HepG2 (cell line): ENCODE measurements at regions of chr9 and their contacts with region 1.

Region 1: DNA sequence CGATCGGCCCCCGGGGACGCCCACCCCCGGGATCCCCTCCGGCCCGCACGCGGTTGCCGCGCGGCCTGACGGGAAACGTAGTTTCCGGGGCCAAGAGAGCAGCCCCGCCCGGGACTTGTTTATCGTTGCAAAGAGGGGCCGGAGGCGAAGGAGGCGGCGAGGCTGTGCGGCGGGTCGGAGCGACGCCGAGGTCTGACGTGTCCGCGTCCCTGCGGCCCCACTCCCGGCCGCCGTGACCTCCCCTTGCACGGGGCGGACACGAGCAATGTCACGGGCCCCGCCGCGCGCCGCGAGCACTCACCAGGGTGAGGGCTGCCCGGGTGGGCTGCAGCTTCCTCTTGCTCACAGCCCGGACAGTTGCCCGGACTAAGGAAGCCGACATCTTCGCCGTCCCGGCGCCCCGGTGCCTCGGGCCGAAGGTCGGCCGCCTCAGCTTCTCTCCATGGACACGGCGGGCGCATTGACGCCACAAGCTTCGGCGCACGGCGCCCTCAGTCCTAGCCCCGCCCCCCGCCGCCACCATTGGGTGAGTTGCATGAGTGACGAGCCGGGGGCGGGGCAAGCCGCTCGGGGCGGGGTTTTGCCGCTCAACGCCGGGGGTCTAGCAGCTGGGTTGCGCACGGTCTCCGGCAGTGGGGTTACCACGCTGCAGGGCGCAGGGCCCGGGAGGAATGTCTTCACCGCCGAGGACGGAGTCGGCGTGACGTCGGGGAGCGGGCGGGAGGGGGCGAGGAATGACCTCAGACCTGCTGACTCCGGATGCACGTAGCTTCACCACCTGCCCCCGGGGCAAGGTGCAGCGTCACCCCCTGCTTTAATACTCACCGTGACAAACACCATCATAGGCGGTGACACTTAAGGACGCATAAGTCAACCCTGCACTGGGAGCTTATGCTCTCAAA is at the start of gene ISCA1:
- DNase-seq: peak; percentile 86
- ATAC-seq: peak; percentile 85
- H3K4me3 ChIP-seq: peak within 1 kb of the TSS; percentile 69 to 93 (median 86)
- H3K27ac ChIP-seq: peak within 1 kb of the TSS; percentile 97
- H3K4me1 ChIP-seq: peaks cover 46% of the 10 kb centered on the region
- H3K27me3 ChIP-seq: no peaks in the 10 kb centered on the region
- CTCF ChIP-seq: no peak; the same call in 1 of the 2 replicates
- EP300 ChIP-seq: no peak
- POLR2A ChIP-seq: peak; percentile 81 to 87
- RAD21 ChIP-seq: peak; percentile 45; the same call in 1 of the 2 replicates
- total RNA-seq, gene ISCA1: 40.9 and 55.0 TPM in 2 replicates

Region 2: GRCh38 chr9:85940832-85941621 is 341.3 kb before region 1 on chr9 and contains the start of gene NAA35:
- CTCF ChIA-PET with region 1: no interaction called
- POLR2A ChIA-PET with region 1: no interaction called
- in situ Hi-C with region 1: loop called (anchors 10 kb)
- intact Hi-C with region 1: no loop called
- DNase-seq: peak; percentile 94
- ATAC-seq: peak; percentile 91
- H3K4me3 ChIP-seq: peak within 1 kb of the TSS; percentile 85 to 99 (median 91)
- H3K27ac ChIP-seq: peak within 1 kb of the TSS; percentile 93
- H3K4me1 ChIP-seq: peaks cover 52% of the 10 kb centered on the region
- H3K27me3 ChIP-seq: no peaks in the 10 kb centered on the region; a peak in 1 of 5 replicates
- CTCF ChIP-seq: peak; percentile 6; the same call in 1 of the 2 replicates
- EP300 ChIP-seq: 0 out of 4 replicates have a peak, but pooled peaks of 1 of the 2 experiments have one; percentile 11
- POLR2A ChIP-seq: peak; percentile 38 to 80; a peak in 3 of 4 replicates
- RAD21 ChIP-seq: no peak
- total RNA-seq, gene NAA35: 28.9 and 35.1 TPM in 2 replicates

Region 3: DNA sequence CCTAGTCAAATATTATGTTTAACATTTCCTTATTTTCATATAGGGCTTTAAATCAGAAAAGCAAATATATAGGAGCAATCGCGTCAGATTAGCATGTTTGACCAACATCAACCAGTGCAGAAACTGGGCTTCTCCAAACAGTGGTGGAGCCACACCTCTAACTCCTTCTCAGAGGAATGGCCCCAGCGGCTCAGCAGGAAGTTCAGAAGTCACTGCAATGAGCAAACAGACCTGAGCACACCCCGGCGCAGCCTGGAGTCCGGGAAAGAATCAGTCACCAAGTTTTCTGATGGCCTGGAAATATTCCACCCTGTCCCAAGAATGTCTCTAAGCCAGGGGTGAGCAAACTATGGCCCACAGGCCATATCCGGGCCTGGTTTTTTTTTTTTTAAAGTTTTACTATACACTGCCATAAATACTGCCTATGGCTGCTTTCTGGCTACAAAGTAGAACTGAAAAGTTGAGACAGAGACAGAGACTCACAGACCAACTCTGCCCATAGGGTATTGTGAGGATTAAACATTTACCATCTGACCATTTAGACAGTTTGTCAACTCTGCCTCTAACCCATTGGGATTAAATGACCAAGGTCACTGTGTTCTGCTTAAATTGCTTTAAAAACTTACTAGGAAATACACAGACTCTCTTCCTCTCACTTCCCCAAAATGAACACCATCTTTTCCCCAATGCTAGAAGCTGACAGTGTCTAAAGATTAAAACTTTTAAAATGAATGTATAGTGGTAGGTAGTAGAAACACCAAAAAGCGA is 188.4 kb before region 1 on chr9:
- CTCF ChIA-PET with region 1: no interaction called
- POLR2A ChIA-PET with region 1: no interaction called
- in situ Hi-C with region 1: no loop called
- intact Hi-C with region 1: loop called (anchors 5 kb)
- DNase-seq: peak; percentile 95
- ATAC-seq: peak; percentile 100
- H3K4me3 ChIP-seq: no peak overlapping the region
- H3K27ac ChIP-seq: no peak overlapping the region
- H3K4me1 ChIP-seq: peaks cover 20% of the 10 kb centered on the region
- H3K27me3 ChIP-seq: peaks cover 6 to 66% of the 10 kb centered on the region in 2 experiments
- CTCF ChIP-seq: no peak
- EP300 ChIP-seq: peak in 1 of 2 experiments; percentile 50; a peak in 2 of 4 replicates
- POLR2A ChIP-seq: no peak
- RAD21 ChIP-seq: no peak

Region 4: DNA sequence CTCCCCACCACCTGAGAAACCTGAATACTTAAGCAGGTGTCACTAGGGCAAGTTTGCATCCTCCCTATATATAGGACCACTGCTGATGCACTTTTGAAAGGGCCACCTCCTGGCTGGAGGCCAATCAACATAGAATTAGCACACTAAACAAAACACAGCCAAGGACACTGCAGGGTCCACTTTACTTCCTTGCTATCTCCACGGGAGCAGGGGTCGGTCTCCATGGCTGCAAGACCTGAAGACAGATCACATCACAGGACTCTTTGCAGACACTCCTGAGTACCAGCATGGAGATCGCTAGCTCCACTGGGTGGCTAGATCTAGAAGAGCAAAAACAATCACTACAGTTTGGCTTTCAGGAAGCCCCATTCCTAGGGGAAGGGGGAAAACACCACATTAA is 95.2 kb before region 1 on chr9:
- CTCF ChIA-PET with region 1: no interaction called
- POLR2A ChIA-PET with region 1: no interaction called
- in situ Hi-C with region 1: no loop called
- intact Hi-C with region 1: no loop called
- DNase-seq: peak; percentile 2
- ATAC-seq: peak; percentile 35; the same call in 1 of the 3 replicates
- H3K4me3 ChIP-seq: no peak overlapping the region
- H3K27ac ChIP-seq: no peak overlapping the region
- H3K4me1 ChIP-seq: 0 out of 2 replicates have a peak, but pooled peaks cover 4% of the 10 kb centered on the region
- H3K27me3 ChIP-seq: peaks cover 0 to 10% of the 10 kb centered on the region in 2 experiments; a peak in 1 of 5 replicates
- CTCF ChIP-seq: no peak
- EP300 ChIP-seq: no peak
- POLR2A ChIP-seq: no peak
- RAD21 ChIP-seq: no peak

Region 5: GRCh38 chr9:86246752-86247161 is 35.6 kb before region 1 on chr9:
- CTCF ChIA-PET with region 1: no interaction called
- POLR2A ChIA-PET with region 1: no interaction called
- in situ Hi-C with region 1: no loop called
- intact Hi-C with region 1: no loop called
- DNase-seq: peak; percentile 61
- ATAC-seq: peak; percentile 100
- H3K4me3 ChIP-seq: peak overlapping the region in 2 of 3 experiments; percentile 16 to 29; a peak in 3 of 6 replicates
- H3K27ac ChIP-seq: no peak overlapping the region
- H3K4me1 ChIP-seq: peaks cover 25% of the 10 kb centered on the region
- H3K27me3 ChIP-seq: no peaks in the 10 kb centered on the region
- CTCF ChIP-seq: peak; percentile 79
- EP300 ChIP-seq: no peak
- POLR2A ChIP-seq: no peak
- RAD21 ChIP-seq: peak; percentile 63

Region 6: GRCh38 chr9:86257391-86257790 is 24.9 kb before region 1 on chr9:
- CTCF ChIA-PET with region 1: no interaction called
- POLR2A ChIA-PET with region 1: no interaction called
- in situ Hi-C with region 1: no loop called
- intact Hi-C with region 1: no loop called
- DNase-seq: no peak
- ATAC-seq: no peak
- H3K4me3 ChIP-seq: no peak overlapping the region
- H3K27ac ChIP-seq: no peak overlapping the region
- H3K4me1 ChIP-seq: no peaks in the 10 kb centered on the region
- H3K27me3 ChIP-seq: no peaks in the 10 kb centered on the region
- CTCF ChIP-seq: no peak
- EP300 ChIP-seq: no peak
- POLR2A ChIP-seq: no peak
- RAD21 ChIP-seq: no peak

Region 7: DNA sequence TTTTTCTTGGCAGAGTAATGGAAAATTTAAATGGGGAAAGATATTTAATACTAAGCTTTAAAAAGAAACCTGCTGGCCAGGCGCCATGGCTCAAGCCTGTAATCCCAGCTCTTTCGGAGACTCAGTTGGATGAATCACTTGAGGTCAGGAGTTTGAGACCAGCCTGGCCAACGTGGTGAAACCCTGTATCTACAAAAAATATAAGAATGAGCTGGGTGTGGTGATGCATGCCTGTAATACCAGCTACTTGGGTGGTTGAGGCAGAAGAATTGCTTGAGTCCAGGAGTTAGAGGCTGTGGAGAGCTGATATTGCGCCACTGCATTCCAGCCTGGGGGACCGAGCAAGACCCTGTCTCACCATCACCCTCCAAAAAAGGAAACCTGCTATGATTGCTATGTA is 39.0 kb after region 1 on chr9:
- CTCF ChIA-PET with region 1: no interaction called
- POLR2A ChIA-PET with region 1: no interaction called
- in situ Hi-C with region 1: no loop called
- intact Hi-C with region 1: no loop called
- DNase-seq: no peak
- ATAC-seq: no peak
- H3K4me3 ChIP-seq: no peak overlapping the region
- H3K27ac ChIP-seq: no peak overlapping the region
- H3K4me1 ChIP-seq: no peaks in the 10 kb centered on the region
- H3K27me3 ChIP-seq: no peaks in the 10 kb centered on the region
- CTCF ChIP-seq: no peak
- EP300 ChIP-seq: no peak
- POLR2A ChIP-seq: no peak
- RAD21 ChIP-seq: no peak

Region 8: DNA sequence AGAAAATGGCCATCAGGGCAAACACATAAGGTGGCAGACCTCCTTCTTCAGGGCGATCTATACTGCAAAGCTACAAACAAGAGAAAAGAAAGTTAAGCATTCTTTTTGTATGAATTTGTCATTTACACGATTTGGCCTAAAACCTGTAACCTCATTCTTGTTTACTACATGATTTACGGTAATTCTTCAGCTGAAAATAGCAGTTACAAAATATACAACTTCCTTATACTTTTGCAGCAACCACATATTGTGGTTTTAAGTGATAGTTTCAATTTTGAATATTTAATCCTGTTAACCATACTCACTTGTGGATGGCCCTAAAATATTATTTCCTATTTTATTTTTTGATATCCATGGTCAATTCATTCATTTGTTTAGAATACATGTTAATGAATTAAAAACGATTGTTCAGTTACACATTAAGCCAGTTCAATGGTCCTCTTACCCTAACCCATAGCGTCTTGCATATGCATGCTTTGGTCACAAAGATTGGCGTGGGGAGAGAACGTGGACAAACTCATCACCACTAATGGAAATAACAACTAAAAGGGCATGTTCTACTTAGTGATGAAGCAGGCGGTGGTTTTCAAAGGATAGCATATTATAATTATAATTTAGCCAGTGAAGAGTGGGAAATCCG is 55.3 kb after region 1 on chr9:
- CTCF ChIA-PET with region 1: no interaction called
- POLR2A ChIA-PET with region 1: interaction called, 4 read pairs
- in situ Hi-C with region 1: no loop called
- intact Hi-C with region 1: loop called (anchors 2 kb)
- DNase-seq: no peak
- ATAC-seq: no peak
- H3K4me3 ChIP-seq: no peak overlapping the region
- H3K27ac ChIP-seq: peak overlapping the region; percentile 78
- H3K4me1 ChIP-seq: peaks cover 68% of the 10 kb centered on the region
- H3K27me3 ChIP-seq: no peaks in the 10 kb centered on the region
- CTCF ChIP-seq: no peak
- EP300 ChIP-seq: no peak
- POLR2A ChIP-seq: no peak
- RAD21 ChIP-seq: no peak

Region 9: GRCh38 chr9:86354011-86354817 is 71.9 kb after region 1 on chr9 and contains the start of gene TUT7:
- CTCF ChIA-PET with region 1: no interaction called
- POLR2A ChIA-PET with region 1: interaction called, 4 read pairs
- in situ Hi-C with region 1: no loop called
- intact Hi-C with region 1: loop called (anchors 5 kb)
- DNase-seq: peak; percentile 90
- ATAC-seq: peak; percentile 95
- H3K4me3 ChIP-seq: peak within 1 kb of the TSS; percentile 94 to 100 (median 96)
- H3K27ac ChIP-seq: peak within 1 kb of the TSS; percentile 85
- H3K4me1 ChIP-seq: peaks cover 47% of the 10 kb centered on the region
- H3K27me3 ChIP-seq: no peaks in the 10 kb centered on the region; a peak in 1 of 5 replicates
- CTCF ChIP-seq: 0 out of 2 replicates have a peak, but pooled peaks have one; percentile 1
- EP300 ChIP-seq: no peak
- POLR2A ChIP-seq: peak; percentile 74 to 89; a peak in 3 of 4 replicates
- RAD21 ChIP-seq: peak; percentile 63
- total RNA-seq, gene TUT7: 19.4 and 21.3 TPM in 2 replicates

Region 10: GRCh38 chr9:86405926-86406325 is 123.6 kb after region 1 on chr9:
- CTCF ChIA-PET with region 1: no interaction called
- POLR2A ChIA-PET with region 1: interaction called, 15 read pairs
- in situ Hi-C with region 1: no loop called
- intact Hi-C with region 1: loop called (anchors 10 kb)
- DNase-seq: peak; percentile 53
- ATAC-seq: peak; percentile 65
- H3K4me3 ChIP-seq: peak overlapping the region in 2 of 3 experiments; percentile 32 to 47; a peak in 3 of 6 replicates
- H3K27ac ChIP-seq: peak overlapping the region; percentile 59
- H3K4me1 ChIP-seq: peaks cover 63% of the 10 kb centered on the region
- H3K27me3 ChIP-seq: no peaks in the 10 kb centered on the region
- CTCF ChIP-seq: no peak
- EP300 ChIP-seq: 0 out of 4 replicates have a peak, but pooled peaks of 1 of the 2 experiments have one; percentile 15
- POLR2A ChIP-seq: no peak
- RAD21 ChIP-seq: no peak

Region 11: GRCh38 chr9:87324613-87325194 is 1042.4 kb after region 1 on chr9:
- CTCF ChIA-PET with region 1: no interaction called
- POLR2A ChIA-PET with region 1: no interaction called
- in situ Hi-C with region 1: no loop called
- intact Hi-C with region 1: loop called (anchors 5 kb)
- DNase-seq: peak; percentile 50
- ATAC-seq: peak; percentile 65; the same call in 2 of the 3 replicates
- H3K4me3 ChIP-seq: no peak overlapping the region
- H3K27ac ChIP-seq: no peak overlapping the region
- H3K4me1 ChIP-seq: no peaks in the 10 kb centered on the region
- H3K27me3 ChIP-seq: no peaks in the 10 kb centered on the region
- CTCF ChIP-seq: peak; percentile 83
- EP300 ChIP-seq: no peak
- POLR2A ChIP-seq: no peak
- RAD21 ChIP-seq: peak; percentile 71; the same call in 1 of the 2 replicates